ENCODE measurements at regions of chr6 and their contacts with region 1.

Region 1: DNA sequence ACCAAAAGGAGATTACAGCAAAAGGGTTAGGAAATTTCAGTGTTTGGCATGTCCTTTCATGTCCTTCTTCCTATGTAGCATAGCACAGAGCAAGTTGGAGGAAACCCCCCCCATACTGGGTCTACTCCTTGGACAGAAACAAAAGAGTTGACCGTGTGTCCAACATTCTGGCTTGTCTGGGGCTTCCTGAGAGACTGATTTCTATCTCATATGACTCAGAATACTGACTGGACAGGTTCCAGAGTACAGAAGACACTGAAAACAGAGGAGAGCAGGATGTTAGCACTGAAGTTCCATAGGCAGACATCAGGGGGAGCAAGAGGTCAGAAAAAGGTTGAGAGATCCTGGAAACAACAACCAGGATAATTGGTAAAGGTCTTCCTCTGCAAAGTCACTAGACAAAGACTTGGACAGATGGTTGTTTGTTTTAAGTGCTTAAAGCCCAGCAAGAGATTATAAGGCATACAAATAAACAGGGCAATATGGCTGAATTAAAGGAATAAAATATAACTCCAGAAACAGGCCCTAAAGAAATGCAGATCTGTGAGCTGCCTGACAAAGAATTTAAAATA is 48.4 kb downstream of the USP49 start:
- DNase-seq: peak; percentile 98
- H3K4me3 ChIP-seq: peak overlapping the region in 1 of 3 experiments; percentile 1
- H3K27ac ChIP-seq: peak overlapping the region; percentile 74
- H3K4me1 ChIP-seq: peaks cover 13% of the 10 kb centered on the region
- H3K27me3 ChIP-seq: no peaks in the 10 kb centered on the region
- CTCF ChIP-seq: peak; percentile 92 to 93

Region 2: DNA sequence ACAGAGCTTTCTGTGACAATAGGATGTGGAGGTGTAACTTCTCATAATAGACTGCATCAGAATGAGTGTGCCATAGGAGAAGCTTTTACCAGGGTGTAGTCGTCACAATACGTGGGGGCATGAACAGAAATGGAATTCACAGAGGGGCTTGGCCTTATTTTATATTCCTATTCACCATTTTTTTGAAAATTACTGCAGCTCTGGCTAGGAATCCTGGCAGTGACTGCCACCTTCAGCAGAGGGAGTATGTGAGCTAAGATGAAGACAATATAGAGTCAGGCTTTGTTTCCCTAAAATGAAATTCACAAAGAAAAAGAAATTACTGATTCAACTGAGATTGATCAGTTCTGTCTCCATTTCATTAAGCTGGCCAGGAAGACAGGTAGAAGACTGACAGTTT is 45.4 kb before region 1 on chr6:
- CTCF ChIA-PET with region 1: no interaction called
- dilution Hi-C with region 1: no loop called
- in situ Hi-C with region 1: no loop called
- intact Hi-C with region 1: loop called (anchors 5 kb)
- DNase-seq: no peak
- H3K4me3 ChIP-seq: no peak overlapping the region
- H3K27ac ChIP-seq: no peak overlapping the region
- H3K4me1 ChIP-seq: no peaks in the 10 kb centered on the region
- H3K27me3 ChIP-seq: no peaks in the 10 kb centered on the region
- CTCF ChIP-seq: peak; percentile 65 to 70

Region 3: DNA sequence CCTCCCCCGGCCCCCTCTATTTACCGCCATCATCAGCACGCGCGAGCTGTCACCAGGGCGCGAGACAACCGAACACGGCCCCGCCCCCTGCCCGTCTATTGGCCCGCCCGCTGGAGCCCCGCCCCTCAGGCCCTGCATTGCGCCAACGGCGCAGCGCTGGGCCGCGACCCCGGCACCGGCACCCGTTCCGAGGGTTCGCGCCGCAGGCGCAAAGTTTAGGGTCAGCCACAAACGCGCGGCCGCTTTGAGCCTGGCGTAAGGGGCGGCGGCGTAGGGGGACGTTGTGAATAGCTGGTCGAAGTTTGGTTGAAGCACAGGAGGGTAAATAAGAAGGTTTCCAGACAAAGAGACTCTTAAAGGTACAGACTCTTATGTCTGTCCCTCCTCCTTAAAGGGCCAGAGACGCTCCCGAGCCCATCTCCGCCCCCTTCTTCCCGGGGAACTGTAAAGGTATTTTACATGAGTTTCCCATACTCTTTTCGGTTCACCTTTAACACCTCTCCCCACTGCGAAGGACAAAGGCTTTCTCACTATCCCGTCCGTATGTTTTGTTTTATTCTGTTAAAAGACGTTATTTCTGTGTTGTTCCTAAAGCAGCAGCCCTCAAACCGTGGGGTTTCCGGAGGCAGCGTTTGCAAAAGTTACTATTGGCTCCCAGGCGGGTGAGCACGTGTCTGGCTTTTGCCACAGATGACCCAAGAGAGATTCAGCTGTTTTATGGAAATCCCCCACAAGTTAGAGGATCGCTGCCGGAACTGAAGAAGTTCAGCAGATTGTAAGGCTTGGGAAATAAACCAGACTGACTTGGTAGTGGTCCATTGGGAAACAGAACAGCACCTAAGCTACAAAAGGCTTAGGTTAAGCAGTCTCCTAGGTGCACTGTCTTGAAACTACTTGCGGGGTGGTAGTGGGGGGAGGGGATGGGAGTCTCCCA is 48.8 kb after region 1 on chr6 and contains the start of gene USP49:
- CTCF ChIA-PET with region 1: no interaction called
- dilution Hi-C with region 1: no loop called
- in situ Hi-C with region 1: no loop called
- intact Hi-C with region 1: loop called (anchors 2 kb)
- DNase-seq: peak; percentile 79
- H3K4me3 ChIP-seq: peak within 1 kb of the TSS; percentile 86 to 96 (median 92)
- H3K27ac ChIP-seq: peak within 1 kb of the TSS; percentile 82
- H3K4me1 ChIP-seq: peaks cover 16% of the 10 kb centered on the region
- H3K27me3 ChIP-seq: no peaks in the 10 kb centered on the region
- CTCF ChIP-seq: no peak
- total RNA-seq, gene USP49: 3.6 to 3.7 TPM

Region 4: DNA sequence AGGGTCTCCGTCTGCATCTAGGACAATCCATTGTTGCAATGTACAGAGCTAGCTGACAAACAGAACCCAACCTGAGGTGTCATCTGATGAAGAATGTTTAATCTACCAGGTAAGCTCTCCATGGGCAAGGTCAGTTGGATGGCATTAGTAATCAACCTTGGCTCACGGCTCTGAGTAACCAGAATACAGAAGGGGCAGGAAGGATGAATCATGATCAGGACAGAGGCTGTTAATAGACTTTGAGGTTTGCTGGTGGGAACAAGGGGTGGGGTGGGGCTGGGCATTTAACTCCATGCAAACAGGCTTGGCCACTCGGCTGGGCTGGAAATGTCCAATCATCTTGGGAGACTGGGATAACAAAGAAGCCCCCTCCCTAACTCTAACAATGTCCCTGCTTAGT is 448.0 kb after region 1 on chr6:
- CTCF ChIA-PET with region 1: no interaction called
- dilution Hi-C with region 1: no loop called
- in situ Hi-C with region 1: no loop called
- intact Hi-C with region 1: no loop called
- DNase-seq: peak; percentile 98
- H3K4me3 ChIP-seq: no peak overlapping the region
- H3K27ac ChIP-seq: peak overlapping the region; percentile 90
- H3K4me1 ChIP-seq: peaks cover 60% of the 10 kb centered on the region
- H3K27me3 ChIP-seq: no peaks in the 10 kb centered on the region
- CTCF ChIP-seq: no peak

Measured in mammary epithelial cell (primary cell).